CD4-positive, alpha-beta memory T cell (primary cell): ENCODE measurements at regions of chr3 and their contacts with region 1.

Region 1: DNA sequence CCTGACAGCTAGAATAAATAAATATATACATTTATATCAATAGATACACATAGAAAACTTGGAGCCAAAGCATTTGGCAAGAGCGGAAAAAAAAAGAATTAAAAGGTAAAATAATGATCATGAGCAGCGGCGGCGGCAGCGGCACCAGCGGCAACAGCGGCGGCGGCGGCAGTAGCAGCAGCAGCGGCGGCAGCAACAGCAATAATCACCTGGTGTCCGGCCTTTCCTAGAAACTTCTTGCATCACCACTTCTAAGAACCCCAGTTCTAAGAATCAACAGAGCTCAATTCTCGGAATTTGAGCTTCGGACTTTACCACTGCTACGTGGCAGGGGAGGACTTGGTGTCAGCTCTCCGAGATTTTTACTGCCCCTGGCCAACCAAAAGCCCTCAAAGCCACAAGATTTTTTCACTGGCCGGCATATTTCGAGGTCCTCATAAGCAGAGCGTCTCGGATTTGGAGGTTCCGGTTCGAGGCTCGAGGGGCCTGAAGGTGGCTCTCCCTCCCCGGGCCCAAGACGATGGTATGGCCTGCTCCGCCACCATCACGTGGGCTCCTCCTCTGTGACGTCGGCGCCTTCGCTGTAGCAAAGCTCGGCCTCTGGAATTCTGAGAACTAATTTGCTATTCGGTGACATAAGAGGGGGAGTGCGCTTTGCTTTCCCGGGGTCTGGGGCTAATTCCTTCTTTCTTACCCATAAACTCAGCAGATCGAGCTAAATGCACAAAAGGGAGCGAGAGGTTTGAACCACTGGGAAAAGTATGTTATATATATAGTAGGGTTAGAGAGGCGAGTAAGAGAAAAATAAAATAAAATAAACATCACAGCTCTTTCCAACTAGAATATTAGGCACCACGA is at the start of gene BCL6:
- DNase-seq: peak; percentile 92 to 95 (median 94)
- H3K4me3 ChIP-seq: peak within 1 kb of the TSS; percentile 71 to 98
- H3K4me3 Mint-ChIP-seq: peak within 1 kb of the TSS; percentile 95 to 99 (median 96)
- H3K27ac ChIP-seq: peak within 1 kb of the TSS; percentile 82
- H3K27ac Mint-ChIP-seq: peak within 1 kb of the TSS; percentile 99
- H3K4me1 ChIP-seq: peaks cover 53% of the 10 kb centered on the region
- H3K4me1 Mint-ChIP-seq: peaks cover 24 to 74% (median 52%) of the 10 kb centered on the region in 4 donors
- H3K27me3 ChIP-seq: no peaks in the 10 kb centered on the region
- H3K27me3 Mint-ChIP-seq: no peaks in the 10 kb centered on the region
- total RNA-seq, gene BCL6: 31.4 to 34.8 TPM

Region 2: DNA sequence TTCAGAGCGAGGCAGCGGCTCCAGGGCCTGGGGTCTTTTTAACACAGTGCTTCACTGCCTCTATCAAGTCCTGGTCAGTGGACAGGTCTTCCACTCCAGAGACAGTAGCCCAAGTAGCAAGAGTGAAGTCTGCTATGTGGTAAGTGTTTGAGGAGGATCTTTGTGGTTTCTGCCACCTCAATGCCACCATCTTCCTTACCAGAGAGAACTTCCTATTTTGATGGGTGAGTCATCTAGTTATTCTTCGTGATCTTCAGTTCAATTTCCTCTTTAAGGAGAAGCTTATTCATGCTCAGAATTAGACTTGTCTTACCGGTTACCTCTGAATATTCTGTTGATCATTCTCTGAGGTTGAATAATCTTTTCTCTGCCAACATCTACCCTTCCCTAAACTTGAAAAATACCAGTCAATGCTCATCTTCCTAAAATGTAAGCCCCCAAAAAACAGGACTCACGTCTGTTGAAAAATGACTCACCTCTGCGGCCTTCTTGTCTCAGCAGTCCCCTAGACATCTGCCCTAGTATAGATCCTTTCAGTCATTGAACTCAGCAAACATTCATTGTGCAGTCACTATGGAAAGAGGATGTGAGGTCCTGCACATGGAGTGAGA is 32.0 kb after region 1 on chr3:
- CTCF ChIA-PET with region 1: interaction called, 14 read pairs
- POLR2A ChIA-PET with region 1: interaction called, 10 read pairs
- intact Hi-C with region 1: loop called (anchors 1 kb)
- DNase-seq: peak; percentile 52 to 74 (median 61)
- H3K4me3 ChIP-seq: peak overlapping the region in 1 of 2 donors; percentile 17
- H3K4me3 Mint-ChIP-seq: peak overlapping the region in 7 of 8 donors; percentile 0 to 81 (median 70)
- H3K27ac ChIP-seq: peak overlapping the region; percentile 37
- H3K27ac Mint-ChIP-seq: peak overlapping the region; percentile 84 to 97 (median 90)
- H3K4me1 ChIP-seq: peaks cover 27% of the 10 kb centered on the region
- H3K4me1 Mint-ChIP-seq: peaks cover 24 to 35% (median 26%) of the 10 kb centered on the region in 4 donors
- H3K27me3 ChIP-seq: no peaks in the 10 kb centered on the region
- H3K27me3 Mint-ChIP-seq: peaks cover 0 to 2% of the 10 kb centered on the region in 2 donors

Region 3: DNA sequence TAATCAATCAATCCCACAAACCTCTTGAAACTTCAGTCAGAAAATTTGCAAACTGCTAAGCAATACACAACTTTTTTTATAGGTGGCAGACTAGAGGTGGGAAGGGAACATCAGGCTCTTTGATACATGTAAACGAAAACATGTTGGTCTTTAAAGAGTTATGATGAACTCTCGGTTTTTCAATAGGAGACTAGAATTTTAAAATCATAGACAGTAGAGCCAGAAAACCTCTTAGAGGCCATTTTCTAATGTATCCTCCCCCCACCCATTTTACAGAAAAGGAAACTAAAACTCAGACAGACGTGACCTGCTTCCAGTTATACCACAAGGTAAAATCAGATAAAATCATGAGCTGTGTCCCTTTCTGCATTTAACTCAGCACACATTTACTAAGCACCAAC is 229.4 kb after region 1 on chr3:
- CTCF ChIA-PET with region 1: interaction called, 40 read pairs
- POLR2A ChIA-PET with region 1: interaction called, 14 read pairs
- intact Hi-C with region 1: loop called (anchors 1 kb)
- DNase-seq: peak; percentile 55 to 70 (median 57)
- H3K4me3 ChIP-seq: peak overlapping the region; percentile 2 to 16
- H3K4me3 Mint-ChIP-seq: peak overlapping the region; percentile 57 to 90 (median 74)
- H3K27ac ChIP-seq: peak overlapping the region; percentile 46
- H3K27ac Mint-ChIP-seq: peak overlapping the region; percentile 85 to 98 (median 91)
- H3K4me1 ChIP-seq: peaks cover 55% of the 10 kb centered on the region
- H3K4me1 Mint-ChIP-seq: peaks cover 56 to 67% (median 62%) of the 10 kb centered on the region in 4 donors
- H3K27me3 ChIP-seq: no peaks in the 10 kb centered on the region
- H3K27me3 Mint-ChIP-seq: no peaks in the 10 kb centered on the region

Region 4: DNA sequence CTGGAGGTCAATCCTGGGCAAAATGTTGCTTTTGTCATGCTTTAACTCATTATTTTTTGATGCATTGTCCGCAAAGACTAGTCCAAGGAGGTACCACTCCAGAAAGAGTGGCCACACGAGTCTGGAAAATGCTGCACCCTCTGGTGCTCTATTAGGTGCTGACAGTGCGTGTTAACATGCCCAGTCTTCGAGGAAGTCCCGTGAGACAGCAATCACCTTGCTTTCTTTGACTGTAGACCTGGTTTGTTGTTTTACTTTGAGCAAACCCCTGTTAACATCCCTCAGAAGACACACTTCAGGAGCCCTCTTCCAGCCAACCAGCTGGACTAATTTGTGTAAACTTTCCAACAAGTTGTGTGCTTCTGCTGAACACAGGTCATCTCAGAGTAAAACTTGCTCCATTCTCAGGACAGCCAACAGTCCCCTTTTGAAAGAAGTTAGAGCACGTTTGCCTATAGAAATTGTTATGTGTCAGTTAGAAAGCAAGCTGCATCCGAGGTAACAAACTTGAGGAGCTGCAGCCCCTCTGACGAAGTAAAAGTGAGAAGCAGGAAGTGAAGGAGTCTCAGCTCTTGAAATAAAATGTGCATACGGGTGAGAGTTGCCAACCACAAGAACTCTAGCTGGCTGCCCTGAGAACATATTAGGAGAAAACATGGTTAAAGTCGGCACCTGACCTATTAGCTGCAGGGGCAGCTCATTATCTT is 613.5 kb after region 1 on chr3:
- CTCF ChIA-PET with region 1: interaction called, 10 read pairs
- POLR2A ChIA-PET with region 1: interaction called, 3 read pairs
- intact Hi-C with region 1: loop called (anchors 10 kb)
- DNase-seq: peak in 4 of 5 donors; percentile 24 to 39 (median 30)
- H3K4me3 ChIP-seq: peak overlapping the region in 1 of 2 donors; percentile 4
- H3K4me3 Mint-ChIP-seq: peak overlapping the region; percentile 39 to 76 (median 70)
- H3K27ac ChIP-seq: no peak overlapping the region
- H3K27ac Mint-ChIP-seq: peak overlapping the region; percentile 31 to 82 (median 73)
- H3K4me1 ChIP-seq: peaks cover 22% of the 10 kb centered on the region
- H3K4me1 Mint-ChIP-seq: peaks cover 36 to 55% (median 43%) of the 10 kb centered on the region in 4 donors
- H3K27me3 ChIP-seq: no peaks in the 10 kb centered on the region
- H3K27me3 Mint-ChIP-seq: no peaks in the 10 kb centered on the region

Region 5: GRCh38 chr3:188954590-188955208 is 1209.3 kb after region 1 on chr3:
- CTCF ChIA-PET with region 1: interaction called, 729 read pairs
- POLR2A ChIA-PET with region 1: interaction called, 90 read pairs
- intact Hi-C with region 1: no loop called
- DNase-seq: peak; percentile 48 to 76 (median 68)
- H3K4me3 ChIP-seq: no peak overlapping the region
- H3K4me3 Mint-ChIP-seq: no peak overlapping the region
- H3K27ac ChIP-seq: no peak overlapping the region
- H3K27ac Mint-ChIP-seq: peak overlapping the region in 1 of 7 donors; percentile 45
- H3K4me1 ChIP-seq: no peaks in the 10 kb centered on the region
- H3K4me1 Mint-ChIP-seq: no peaks in the 10 kb centered on the region
- H3K27me3 ChIP-seq: no peaks in the 10 kb centered on the region
- H3K27me3 Mint-ChIP-seq: no peaks in the 10 kb centered on the region

Region 6: GRCh38 chr3:189148081-189148507 is 1402.7 kb after region 1 on chr3:
- CTCF ChIA-PET with region 1: interaction called, 391 read pairs
- POLR2A ChIA-PET with region 1: interaction called, 56 read pairs
- intact Hi-C with region 1: no loop called
- DNase-seq: peak; percentile 50 to 61 (median 60)
- H3K4me3 ChIP-seq: no peak overlapping the region
- H3K4me3 Mint-ChIP-seq: no peak overlapping the region
- H3K27ac ChIP-seq: no peak overlapping the region
- H3K27ac Mint-ChIP-seq: peak overlapping the region in 1 of 7 donors; percentile 62
- H3K4me1 ChIP-seq: peaks cover 19% of the 10 kb centered on the region
- H3K4me1 Mint-ChIP-seq: peaks cover 13 to 28% (median 21%) of the 10 kb centered on the region in 4 donors
- H3K27me3 ChIP-seq: no peaks in the 10 kb centered on the region
- H3K27me3 Mint-ChIP-seq: no peaks in the 10 kb centered on the region